ENCODE measurements at regions of chr2 and their contacts with region 1.

Region 1: DNA sequence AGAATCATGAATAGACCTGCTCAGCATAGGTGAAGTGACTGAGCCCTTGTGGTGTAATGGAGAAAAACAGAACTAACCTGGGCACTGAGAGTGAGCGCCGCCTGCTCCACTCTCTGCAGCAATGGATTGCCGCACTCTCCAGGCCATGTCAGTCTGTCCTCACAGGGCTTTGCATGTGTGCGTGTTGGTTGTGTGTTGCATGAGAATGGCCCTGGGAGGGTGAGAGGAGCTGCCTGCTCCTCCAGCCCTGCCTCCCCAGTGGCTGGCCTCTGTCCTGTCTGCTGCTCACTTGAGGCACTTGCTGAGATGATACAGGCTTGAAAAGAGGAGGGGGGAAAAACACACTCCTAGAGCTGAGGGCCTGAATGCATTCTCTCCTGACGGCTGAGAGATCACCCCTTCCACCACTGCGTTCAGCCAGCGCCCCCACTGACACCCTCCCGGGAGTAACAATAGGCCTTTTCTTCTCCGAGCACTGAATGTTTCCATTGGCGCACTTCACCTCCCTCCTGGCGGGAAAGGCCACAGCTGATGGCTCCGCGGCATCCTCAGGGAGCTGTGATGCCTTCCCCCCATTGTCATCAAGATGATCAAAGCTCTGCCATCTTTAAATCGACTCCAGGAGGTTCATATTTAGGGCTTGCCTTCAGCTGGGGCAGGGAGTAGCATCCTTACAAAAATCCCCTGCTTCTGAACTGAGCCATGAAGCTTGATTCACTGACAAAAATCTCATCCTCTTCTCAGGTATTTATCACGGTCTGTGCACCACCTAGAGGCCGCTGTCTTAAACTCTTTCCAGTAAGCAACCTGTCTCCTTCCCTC is 49.9 kb upstream of the DAPL1 start:
- DNase-seq: peak; percentile 7 to 78
- H3K4me3 ChIP-seq: peak overlapping the region; percentile 22 to 50 (median 40); a peak in 6 of 8 replicates
- H3K27ac ChIP-seq: no peak overlapping the region
- H3K4me1 ChIP-seq: peaks cover 5 to 11% (median 6%) of the 10 kb centered on the region in 4 experiments
- H3K27me3 ChIP-seq: no peaks in the 10 kb centered on the region; a peak in 1 of 7 replicates
- CTCF ChIP-seq: peak in 2 of 3 experiments; percentile 69; a peak in 3 of 4 replicates
- EP300 ChIP-seq: no peak
- POLR2A ChIP-seq: peak in 1 of 2 experiments; percentile 55; a peak in 1 of 3 replicates
- RAD21 ChIP-seq: peak; percentile 84 to 85

Region 2: DNA sequence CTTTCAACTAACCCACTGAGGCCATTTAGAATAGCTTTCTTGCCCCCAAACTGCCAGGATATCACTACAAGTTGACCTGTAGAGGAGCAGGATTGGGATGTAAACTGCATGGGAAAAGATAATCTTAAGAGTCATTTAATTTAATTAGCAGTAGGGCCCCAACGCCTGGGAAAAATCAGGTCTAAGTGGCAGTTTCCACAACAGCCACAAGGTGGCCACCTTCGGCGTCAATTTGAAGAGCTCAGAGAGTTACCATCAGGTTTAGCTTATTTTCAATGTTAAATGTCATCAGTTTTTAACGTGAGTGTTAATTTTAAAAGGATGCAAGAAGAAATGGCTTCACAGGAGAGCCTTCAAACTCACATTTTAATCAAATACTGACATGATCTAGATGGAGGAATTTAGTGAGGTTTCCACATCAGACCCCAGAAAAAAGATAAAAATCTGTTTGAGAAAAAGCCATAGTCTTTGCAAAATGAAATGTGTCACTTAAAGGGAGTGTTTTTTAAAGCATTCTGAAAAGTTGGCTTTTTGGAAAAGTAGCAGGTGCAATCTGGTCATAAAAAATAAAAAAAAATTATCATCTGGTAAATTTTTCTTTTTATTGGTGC is 720.9 kb before region 1 on chr2:
- CTCF ChIA-PET with region 1: interaction called, 16 read pairs
- POLR2A ChIA-PET with region 1: no interaction called
- DNase-seq: peak in 1 of 2 experiments; percentile 79
- H3K4me3 ChIP-seq: no peak overlapping the region
- H3K27ac ChIP-seq: no peak overlapping the region
- H3K4me1 ChIP-seq: no peaks in the 10 kb centered on the region
- H3K27me3 ChIP-seq: peaks cover 0 to 4% (median 0%) of the 10 kb centered on the region in 4 experiments; a peak in 1 of 7 replicates
- CTCF ChIP-seq: peak; percentile 57 to 69 (median 68)
- EP300 ChIP-seq: no peak
- POLR2A ChIP-seq: no peak
- RAD21 ChIP-seq: peak; percentile 79 to 87

Region 3: GRCh38 chr2:158496986-158497385 is 248.3 kb before region 1 on chr2:
- CTCF ChIA-PET with region 1: no interaction called
- POLR2A ChIA-PET with region 1: no interaction called
- DNase-seq: no peak
- H3K4me3 ChIP-seq: peak overlapping the region in 1 of 4 experiments; percentile 18; a peak in 1 of 8 replicates
- H3K27ac ChIP-seq: no peak overlapping the region
- H3K4me1 ChIP-seq: peaks cover 6 to 18% (median 8%) of the 10 kb centered on the region in 4 experiments; a peak in 6 of 7 replicates
- H3K27me3 ChIP-seq: no peaks in the 10 kb centered on the region
- CTCF ChIP-seq: no peak
- EP300 ChIP-seq: no peak
- POLR2A ChIP-seq: no peak
- RAD21 ChIP-seq: no peak

Region 4: DNA sequence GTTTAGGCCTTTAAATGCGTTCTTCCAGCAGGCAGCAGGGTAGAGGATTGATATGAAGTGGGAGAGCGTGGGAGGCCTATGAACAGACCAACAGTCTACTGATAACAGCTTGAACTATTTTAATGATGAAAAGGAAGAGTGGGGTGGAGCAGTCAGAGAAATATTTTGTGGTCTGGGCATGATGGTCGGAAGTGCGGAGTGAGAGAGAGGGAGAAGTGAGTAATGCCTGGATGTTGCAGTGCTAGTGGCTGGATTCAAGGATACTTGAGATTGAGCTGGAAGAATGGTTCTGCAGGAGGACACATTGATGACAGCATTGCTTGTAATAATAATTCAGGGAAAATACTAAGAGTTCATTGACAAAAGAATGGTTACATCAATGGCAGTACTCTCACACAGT is 101.1 kb before region 1 on chr2:
- CTCF ChIA-PET with region 1: interaction called, 16 read pairs
- POLR2A ChIA-PET with region 1: no interaction called
- DNase-seq: no peak
- H3K4me3 ChIP-seq: no peak overlapping the region
- H3K27ac ChIP-seq: no peak overlapping the region
- H3K4me1 ChIP-seq: no peaks in the 10 kb centered on the region
- H3K27me3 ChIP-seq: no peaks in the 10 kb centered on the region
- CTCF ChIP-seq: no peak
- EP300 ChIP-seq: no peak
- POLR2A ChIP-seq: no peak
- RAD21 ChIP-seq: no peak

Region 5: GRCh38 chr2:158686210-158686691 is 59.0 kb before region 1 on chr2:
- CTCF ChIA-PET with region 1: interaction called, 12 read pairs
- POLR2A ChIA-PET with region 1: no interaction called
- DNase-seq: no peak
- H3K4me3 ChIP-seq: no peak overlapping the region
- H3K27ac ChIP-seq: no peak overlapping the region
- H3K4me1 ChIP-seq: no peaks in the 10 kb centered on the region; a peak in 2 of 7 replicates
- H3K27me3 ChIP-seq: no peaks in the 10 kb centered on the region
- CTCF ChIP-seq: no peak
- EP300 ChIP-seq: no peak
- POLR2A ChIP-seq: no peak
- RAD21 ChIP-seq: no peak

Region 6: DNA sequence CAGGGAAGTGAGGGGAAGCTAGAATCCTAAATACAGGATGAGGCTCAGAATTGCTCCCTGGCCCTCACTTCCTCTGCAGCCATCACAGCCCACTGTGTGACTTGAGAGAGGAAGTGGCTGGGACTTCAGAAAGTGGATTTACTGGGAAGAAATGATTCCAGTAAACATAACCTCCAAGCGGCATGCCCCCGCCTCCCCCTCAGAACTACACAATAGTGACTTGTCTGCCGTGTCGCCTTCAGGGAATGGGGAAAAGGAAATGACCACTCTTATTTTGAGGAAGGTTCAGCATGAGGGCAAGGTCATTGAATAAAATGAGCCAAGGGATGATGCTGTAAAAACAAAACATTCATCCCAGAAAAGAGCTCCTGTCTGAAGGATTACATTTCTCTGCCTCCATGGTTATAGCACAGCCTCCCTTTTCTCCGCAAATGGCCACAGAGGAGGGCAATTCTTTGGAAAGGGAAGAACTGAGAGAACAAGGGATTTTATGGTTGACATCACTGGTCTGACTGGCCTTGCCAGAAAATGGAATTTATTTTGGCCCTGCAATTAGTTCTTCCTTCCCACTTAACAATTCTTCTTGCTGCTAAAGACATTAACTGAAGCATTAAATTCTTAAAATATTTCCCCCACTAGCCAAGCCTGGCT is 29.0 kb before region 1 on chr2:
- CTCF ChIA-PET with region 1: interaction called, 416 read pairs
- POLR2A ChIA-PET with region 1: no interaction called
- DNase-seq: no peak
- H3K4me3 ChIP-seq: no peak overlapping the region
- H3K27ac ChIP-seq: no peak overlapping the region
- H3K4me1 ChIP-seq: no peaks in the 10 kb centered on the region
- H3K27me3 ChIP-seq: no peaks in the 10 kb centered on the region
- CTCF ChIP-seq: no peak
- EP300 ChIP-seq: no peak
- POLR2A ChIP-seq: no peak
- RAD21 ChIP-seq: no peak

Region 7: DNA sequence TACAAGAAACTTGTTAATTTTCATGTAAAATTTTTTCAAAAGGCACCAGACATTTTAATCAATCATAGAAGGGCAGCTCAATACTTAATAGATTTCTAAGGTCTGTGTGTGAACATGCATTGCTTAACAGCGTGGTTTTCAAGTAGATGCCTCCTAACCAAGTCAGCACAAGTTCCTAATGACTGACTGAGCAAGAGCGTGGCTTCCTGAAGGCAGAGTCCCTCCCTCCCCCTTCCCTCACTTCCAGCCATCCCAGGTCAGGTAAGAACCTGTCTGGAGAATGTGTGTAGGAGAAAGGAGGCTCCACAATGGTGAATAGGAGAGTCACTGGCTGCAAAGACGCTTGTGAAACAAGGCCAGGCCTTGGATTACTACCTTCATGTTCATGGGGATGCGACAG is 16.4 kb after region 1 on chr2:
- CTCF ChIA-PET with region 1: interaction called, 144 read pairs
- POLR2A ChIA-PET with region 1: interaction called, 3 read pairs
- DNase-seq: no peak
- H3K4me3 ChIP-seq: no peak overlapping the region
- H3K27ac ChIP-seq: no peak overlapping the region
- H3K4me1 ChIP-seq: peaks cover 0 to 3% (median 0%) of the 10 kb centered on the region in 4 experiments; a peak in 1 of 7 replicates
- H3K27me3 ChIP-seq: no peaks in the 10 kb centered on the region
- CTCF ChIP-seq: no peak
- EP300 ChIP-seq: no peak
- POLR2A ChIP-seq: no peak
- RAD21 ChIP-seq: no peak

Measured in H1 (cell line).